ENCODE measurements at regions of chrX and their contacts with region 1.

Region 1: DNA sequence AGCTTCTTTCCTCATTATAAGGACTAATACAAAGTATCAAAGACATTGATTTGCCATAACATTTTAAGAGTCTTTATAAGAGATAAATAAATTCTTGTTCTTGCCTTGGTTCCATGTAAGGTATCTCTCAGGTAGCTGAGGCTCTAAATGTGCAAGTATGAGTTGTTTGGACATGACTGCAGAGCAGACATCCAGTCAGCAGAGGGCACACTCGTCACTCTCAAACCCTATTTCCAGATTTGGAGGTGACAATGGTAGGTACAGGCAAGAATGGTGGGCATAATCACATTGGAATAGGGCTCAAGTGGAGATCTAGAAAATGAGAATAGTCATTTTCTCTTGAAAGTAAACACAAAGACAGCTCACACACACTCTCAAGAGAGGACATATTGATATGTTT is 133.3 kb upstream of the ZIC3 start:
- DNase-seq: peak in 1 of 2 experiments; percentile 51
- H3K4me3 ChIP-seq: no peak overlapping the region
- H3K27ac ChIP-seq: no peak overlapping the region
- H3K4me1 ChIP-seq: peaks cover 0 to 2% (median 0%) of the 10 kb centered on the region in 4 experiments; a peak in 2 of 7 replicates
- H3K27me3 ChIP-seq: peaks cover 0 to 6% (median 1%) of the 10 kb centered on the region in 4 experiments; a peak in 5 of 7 replicates
- CTCF ChIP-seq: peak; percentile 38 to 70 (median 56)
- EP300 ChIP-seq: no peak
- POLR2A ChIP-seq: no peak
- RAD21 ChIP-seq: peak; percentile 86

Region 2: DNA sequence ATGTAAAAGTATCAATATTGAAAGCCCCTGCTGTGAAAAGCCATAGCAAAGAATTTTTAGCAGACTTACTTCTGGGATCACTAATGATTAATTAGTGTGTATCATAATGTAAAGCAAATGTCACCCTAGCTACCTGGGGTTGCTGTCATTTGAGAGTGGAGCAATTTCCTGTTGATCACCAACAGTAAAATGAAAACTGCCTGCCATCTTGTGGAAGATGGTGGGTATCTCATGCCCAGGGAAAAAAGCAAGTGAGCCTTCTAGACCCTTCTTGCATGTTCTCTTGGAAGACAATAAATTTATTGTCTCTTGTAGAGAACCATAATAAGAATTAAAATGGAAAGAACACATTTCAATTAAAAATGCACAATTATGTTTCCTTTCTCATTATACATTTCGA is 493.5 kb after region 1 on chrX:
- CTCF ChIA-PET with region 1: interaction called, 40 read pairs
- POLR2A ChIA-PET with region 1: no interaction called
- DNase-seq: no peak
- H3K4me3 ChIP-seq: no peak overlapping the region
- H3K27ac ChIP-seq: no peak overlapping the region
- H3K4me1 ChIP-seq: peaks cover 0 to 5% (median 3%) of the 10 kb centered on the region in 4 experiments; a peak in 4 of 7 replicates
- H3K27me3 ChIP-seq: no peaks in the 10 kb centered on the region
- CTCF ChIP-seq: peak in 2 of 3 experiments; percentile 42 to 64; a peak in 2 of 4 replicates
- EP300 ChIP-seq: no peak
- POLR2A ChIP-seq: no peak
- RAD21 ChIP-seq: peak; percentile 88

Measured in H1 (cell line).